ENCODE measurements at regions of chr17 and their contacts with region 1.

Region 1: GRCh38 chr17:27760069-27760885 is 40.1 kb downstream of the NOS2 start:
- DNase-seq: peak; percentile 51
- H3K4me3 Mint-ChIP-seq: no peak overlapping the region
- H3K27ac Mint-ChIP-seq: no peak overlapping the region
- H3K4me1 Mint-ChIP-seq: no peaks in the 10 kb centered on the region
- H3K27me3 Mint-ChIP-seq: peaks cover 11% of the 10 kb centered on the region
- CTCF ChIP-seq: peak; percentile 96

Region 2: DNA sequence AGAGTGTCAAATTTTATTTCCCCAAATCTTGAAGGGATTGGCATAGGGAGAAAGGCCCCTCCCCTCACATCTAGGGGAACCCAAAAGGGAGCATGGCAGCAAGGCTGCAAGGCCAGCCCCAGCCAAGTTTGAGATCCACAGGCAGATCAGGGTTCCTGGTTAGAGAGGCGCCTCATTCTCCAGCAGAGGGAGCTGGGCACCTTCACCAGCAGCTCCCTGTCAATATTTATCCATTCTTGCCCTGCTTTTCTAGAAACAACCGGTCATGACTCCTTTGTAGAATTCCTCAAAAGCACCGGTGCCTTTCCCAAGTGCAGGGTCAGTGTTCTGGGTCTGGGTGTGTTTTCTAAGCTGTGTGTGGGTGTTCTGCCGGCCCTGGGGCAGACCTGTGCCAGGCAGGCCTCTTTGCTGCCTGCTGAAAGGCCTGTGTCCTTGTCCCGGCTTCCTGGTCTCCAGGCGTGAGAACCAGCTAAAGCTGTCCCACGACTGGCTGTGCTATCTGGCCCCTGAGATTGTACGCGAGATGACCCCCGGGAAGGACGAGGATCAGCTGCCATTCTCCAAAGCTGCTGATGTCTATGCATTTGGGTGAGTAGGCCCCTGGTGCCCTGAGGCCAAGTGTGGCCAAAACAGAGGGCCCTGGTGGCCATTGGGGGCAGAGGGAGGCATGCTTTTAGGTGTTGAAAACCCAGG is 150.5 kb before region 1 on chr17:
- CTCF ChIA-PET with region 1: interaction called, 63 read pairs
- POLR2A ChIA-PET with region 1: no interaction called
- intact Hi-C with region 1: loop called (anchors 2 kb)
- DNase-seq: peak; percentile 57
- H3K4me3 Mint-ChIP-seq: no peak overlapping the region
- H3K27ac Mint-ChIP-seq: no peak overlapping the region
- H3K4me1 Mint-ChIP-seq: peaks cover 5% of the 10 kb centered on the region
- H3K27me3 Mint-ChIP-seq: no peaks in the 10 kb centered on the region
- CTCF ChIP-seq: peak; percentile 61

Region 3: GRCh38 chr17:27741361-27741861 is 18.9 kb before region 1 on chr17:
- CTCF ChIA-PET with region 1: interaction called, 10 read pairs
- POLR2A ChIA-PET with region 1: no interaction called
- intact Hi-C with region 1: no loop called
- DNase-seq: peak; percentile 5
- H3K4me3 Mint-ChIP-seq: no peak overlapping the region
- H3K27ac Mint-ChIP-seq: no peak overlapping the region
- H3K4me1 Mint-ChIP-seq: no peaks in the 10 kb centered on the region
- H3K27me3 Mint-ChIP-seq: peaks cover 14% of the 10 kb centered on the region
- CTCF ChIP-seq: no peak

Region 4: GRCh38 chr17:27800522-27800921 is 40.2 kb after region 1 on chr17 and contains the start of gene NOS2:
- CTCF ChIA-PET with region 1: interaction called, 18 read pairs
- POLR2A ChIA-PET with region 1: no interaction called
- intact Hi-C with region 1: no loop called
- DNase-seq: no peak
- H3K4me3 Mint-ChIP-seq: no peak within 1 kb of the TSS
- H3K27ac Mint-ChIP-seq: no peak within 1 kb of the TSS
- H3K4me1 Mint-ChIP-seq: peaks cover 3% of the 10 kb centered on the region
- H3K27me3 Mint-ChIP-seq: peaks cover 45% of the 10 kb centered on the region
- CTCF ChIP-seq: no peak
- total RNA-seq, gene NOS2: not detected in 2 replicates

Region 5: GRCh38 chr17:27873760-27874159 is 113.5 kb after region 1 on chr17:
- CTCF ChIA-PET with region 1: interaction called, 111 read pairs
- POLR2A ChIA-PET with region 1: no interaction called
- intact Hi-C with region 1: no loop called
- DNase-seq: peak; percentile 25
- H3K4me3 Mint-ChIP-seq: no peak overlapping the region
- H3K27ac Mint-ChIP-seq: no peak overlapping the region
- H3K4me1 Mint-ChIP-seq: peaks cover 8% of the 10 kb centered on the region
- H3K27me3 Mint-ChIP-seq: no peaks in the 10 kb centered on the region
- CTCF ChIP-seq: no peak

Region 6: GRCh38 chr17:27879987-27880608 is 119.8 kb after region 1 on chr17:
- CTCF ChIA-PET with region 1: interaction called, 111 read pairs
- POLR2A ChIA-PET with region 1: interaction called, 5 read pairs
- intact Hi-C with region 1: loop called (anchors 1 kb)
- DNase-seq: peak; percentile 77
- H3K4me3 Mint-ChIP-seq: no peak overlapping the region
- H3K27ac Mint-ChIP-seq: no peak overlapping the region
- H3K4me1 Mint-ChIP-seq: no peaks in the 10 kb centered on the region
- H3K27me3 Mint-ChIP-seq: no peaks in the 10 kb centered on the region
- CTCF ChIP-seq: peak; percentile 89